ENCODE measurements at regions of chr11 and their contacts with region 1.

Region 1: GRCh38 chr11:59135648-59136461 is 6.8 kb upstream of the FAM111A start:
- DNase-seq: peak; percentile 89 to 96
- ATAC-seq: peak; percentile 94
- H3K4me3 ChIP-seq: no peak overlapping the region
- H3K27ac ChIP-seq: no peak overlapping the region
- H3K4me1 ChIP-seq: no peaks in the 10 kb centered on the region
- H3K27me3 ChIP-seq: no peaks in the 10 kb centered on the region

Region 2: GRCh38 chr11:59053387-59053786 is 82.5 kb before region 1 on chr11:
- intact Hi-C with region 1: loop called (anchors 10 kb)
- DNase-seq: peak; percentile 78 to 87
- ATAC-seq: no peak
- H3K4me3 ChIP-seq: no peak overlapping the region
- H3K27ac ChIP-seq: no peak overlapping the region
- H3K4me1 ChIP-seq: no peaks in the 10 kb centered on the region
- H3K27me3 ChIP-seq: no peaks in the 10 kb centered on the region

Region 3: DNA sequence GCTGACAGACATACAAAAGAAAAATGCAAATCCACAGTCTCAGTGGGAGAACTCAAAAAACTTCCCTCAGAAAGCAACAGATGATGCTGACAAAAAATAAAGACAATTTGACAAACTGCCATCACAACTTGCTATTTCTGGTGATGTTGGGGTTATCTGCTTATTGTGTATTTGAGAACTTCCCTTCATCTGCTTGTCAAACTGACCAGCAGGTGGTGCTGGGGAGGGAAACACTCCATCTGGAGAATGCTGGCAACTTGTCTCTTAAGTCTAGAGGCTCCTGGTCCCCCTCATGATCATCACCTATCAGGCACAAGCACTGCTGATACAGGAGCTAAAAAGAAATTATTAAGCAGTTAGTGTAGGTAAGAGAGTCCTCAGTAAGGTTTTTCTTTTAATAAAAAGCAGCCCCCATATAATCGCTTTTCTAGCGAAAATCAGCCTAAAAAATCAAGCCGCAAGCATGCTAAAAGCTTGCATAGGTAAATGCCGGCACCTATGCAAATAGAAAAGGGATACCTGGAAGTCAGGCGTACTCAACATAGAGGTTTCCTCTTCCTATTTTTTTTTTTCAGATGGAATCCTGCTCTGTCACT is 38.6 kb before region 1 on chr11:
- intact Hi-C with region 1: loop called (anchors 2 to 5 kb)
- DNase-seq: peak; percentile 68 to 76
- ATAC-seq: no peak
- H3K4me3 ChIP-seq: no peak overlapping the region
- H3K27ac ChIP-seq: no peak overlapping the region
- H3K4me1 ChIP-seq: no peaks in the 10 kb centered on the region
- H3K27me3 ChIP-seq: no peaks in the 10 kb centered on the region

Region 4: DNA sequence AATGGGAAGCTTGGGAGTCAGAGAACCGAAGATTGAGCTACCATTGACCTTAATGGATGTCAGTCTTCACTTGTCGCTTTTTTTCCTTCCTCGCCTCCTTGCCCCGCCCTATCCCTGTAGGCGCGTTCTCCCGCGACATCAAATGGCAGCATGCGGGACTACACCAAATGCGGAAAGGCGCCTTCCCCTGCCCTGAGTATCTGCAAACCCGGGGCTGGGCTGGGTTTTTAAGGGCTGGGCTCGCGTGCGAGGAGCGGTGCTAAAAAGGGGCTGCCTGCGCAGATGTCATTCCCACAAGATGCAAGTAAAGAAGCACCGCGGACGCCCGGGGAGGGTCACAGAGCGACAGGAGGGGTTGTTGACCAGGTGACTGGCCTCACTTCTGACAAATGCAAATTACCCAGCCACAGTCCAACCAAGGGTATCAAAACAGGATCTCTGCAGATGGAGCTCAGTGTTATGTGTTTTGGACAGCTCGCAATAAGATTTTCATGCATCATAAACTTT is 33.5 kb before region 1 on chr11:
- intact Hi-C with region 1: loop called (anchors 2 to 5 kb)
- DNase-seq: peak; percentile 69 to 77
- ATAC-seq: no peak
- H3K4me3 ChIP-seq: no peak overlapping the region
- H3K27ac ChIP-seq: no peak overlapping the region
- H3K4me1 ChIP-seq: no peaks in the 10 kb centered on the region
- H3K27me3 ChIP-seq: no peaks in the 10 kb centered on the region

Measured in aorta (tissue), 5 donors.